Endothelial cell of umbilical vein (primary cell): ENCODE measurements at regions of chr22 and their contacts with region 1.

Region 1: DNA sequence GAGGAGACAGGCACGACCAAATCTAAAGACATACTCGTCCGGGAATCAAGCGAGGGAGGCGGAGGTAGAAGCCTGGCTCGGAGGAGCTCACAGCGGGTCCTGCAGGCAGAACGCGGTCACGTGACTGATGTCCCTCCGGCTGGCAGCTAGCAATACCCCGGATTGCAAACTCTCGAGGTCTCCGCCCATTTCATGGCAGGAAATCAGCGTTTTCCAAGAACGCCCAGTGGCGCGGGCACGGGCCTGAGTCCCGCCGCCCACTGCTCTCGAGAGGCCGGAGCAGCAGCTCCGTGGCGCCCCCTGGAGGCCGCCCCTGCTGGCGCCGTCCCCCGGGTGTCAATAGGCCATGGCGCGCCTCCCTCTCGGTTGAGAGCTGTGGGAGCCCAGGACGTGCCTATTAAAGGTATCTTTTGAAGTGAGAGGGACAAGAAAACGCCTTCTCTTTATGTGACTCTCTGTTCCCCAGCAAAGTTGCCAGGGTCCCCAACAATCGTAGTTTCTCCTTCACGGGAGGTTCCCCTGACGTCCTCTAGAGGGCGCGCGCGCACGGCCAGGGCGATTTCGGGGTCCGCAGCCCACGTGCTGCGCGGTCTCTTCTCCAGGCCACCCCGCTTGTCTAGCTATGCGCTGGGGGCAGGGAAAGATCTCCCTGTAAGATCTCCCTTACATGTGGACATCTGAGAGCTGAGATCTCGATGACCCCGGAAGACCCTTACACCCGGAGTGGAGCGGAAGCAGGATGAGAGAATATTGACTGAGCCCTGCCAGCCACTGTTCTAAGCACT is 37.3 kb upstream of the RBFOX2 start:
- DNase-seq: peak; percentile 95
- H3K4me3 ChIP-seq: peak overlapping the region; percentile 22 to 69 (median 37)
- H3K27ac ChIP-seq: peak overlapping the region; percentile 54
- H3K4me1 ChIP-seq: peaks cover 9% of the 10 kb centered on the region
- H3K27me3 ChIP-seq: no peaks in the 10 kb centered on the region
- CTCF ChIP-seq: peak; percentile 94 to 100
- POLR2A ChIP-seq: peak; percentile 91

Region 2: GRCh38 chr22:35627264-35628041 is 438.5 kb before region 1 on chr22:
- CTCF ChIA-PET with region 1: interaction called, 19 read pairs
- POLR2A ChIA-PET with region 1: no interaction called
- dilution Hi-C with region 1: no loop called
- intact Hi-C with region 1: loop called (anchors 1 kb)
- DNase-seq: peak; percentile 76
- H3K4me3 ChIP-seq: peak overlapping the region; percentile 27 to 58 (median 51)
- H3K27ac ChIP-seq: peak overlapping the region; percentile 30
- H3K4me1 ChIP-seq: peaks cover 8% of the 10 kb centered on the region
- H3K27me3 ChIP-seq: no peaks in the 10 kb centered on the region
- CTCF ChIP-seq: peak; percentile 48 to 54
- POLR2A ChIP-seq: peak; percentile 21

Region 3: DNA sequence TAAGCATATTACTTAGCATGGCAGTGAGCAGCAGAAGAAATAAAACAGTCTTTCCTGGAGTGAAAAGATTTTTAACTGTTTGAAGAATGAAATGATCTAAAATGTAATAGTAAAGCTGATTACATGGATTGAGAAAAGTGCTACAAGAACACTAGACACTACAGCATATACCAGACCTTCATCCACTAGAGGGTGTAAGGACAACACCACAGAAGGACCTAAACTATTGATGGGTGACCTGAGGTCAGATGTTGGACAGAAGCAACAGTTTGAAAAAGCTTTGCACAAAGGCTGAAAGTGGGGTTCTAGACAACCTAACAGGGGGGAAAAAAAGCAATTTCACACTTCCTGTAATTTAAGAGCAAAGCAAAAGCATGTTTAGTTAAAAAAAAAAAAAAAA is 135.0 kb before region 1 on chr22:
- CTCF ChIA-PET with region 1: interaction called, 92 read pairs
- POLR2A ChIA-PET with region 1: no interaction called
- dilution Hi-C with region 1: no loop called
- intact Hi-C with region 1: loop called (anchors 1 kb)
- DNase-seq: peak; percentile 77
- H3K4me3 ChIP-seq: no peak overlapping the region
- H3K27ac ChIP-seq: no peak overlapping the region
- H3K4me1 ChIP-seq: no peaks in the 10 kb centered on the region
- H3K27me3 ChIP-seq: no peaks in the 10 kb centered on the region
- CTCF ChIP-seq: peak; percentile 40 to 60
- POLR2A ChIP-seq: no peak

Region 4: DNA sequence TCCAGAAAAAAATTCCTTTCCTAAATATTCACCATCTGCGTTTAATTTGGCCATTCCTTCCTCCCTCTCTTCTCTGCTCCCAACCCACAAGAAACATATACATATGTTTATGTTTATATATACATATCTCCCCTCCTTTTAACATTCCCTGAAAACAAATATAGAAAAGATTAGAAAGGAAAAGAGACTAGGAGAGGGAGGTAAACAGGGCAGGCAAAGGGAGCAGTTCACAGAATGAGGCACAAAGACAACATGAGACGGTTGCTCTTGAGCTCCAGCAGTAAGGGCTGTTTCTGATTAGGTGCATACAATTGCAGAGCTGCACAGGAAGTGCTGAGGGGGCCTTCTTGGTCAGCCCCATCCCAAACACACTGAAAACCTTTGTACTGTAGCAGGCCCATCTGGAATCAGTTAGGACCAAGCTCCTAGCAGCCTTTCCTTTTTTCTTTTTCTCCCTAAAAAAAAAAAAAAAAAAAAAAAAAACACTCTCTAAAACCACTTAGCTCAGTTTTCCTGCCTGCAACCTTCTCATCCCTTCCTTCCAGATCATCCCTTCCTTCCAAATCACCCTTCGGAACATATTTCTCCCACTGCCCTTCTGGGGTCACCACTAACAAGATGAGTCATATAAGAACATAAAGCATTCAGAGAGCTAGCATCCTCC is 94.4 kb before region 1 on chr22:
- CTCF ChIA-PET with region 1: interaction called, 15 read pairs
- POLR2A ChIA-PET with region 1: no interaction called
- dilution Hi-C with region 1: no loop called
- intact Hi-C with region 1: no loop called
- DNase-seq: peak; percentile 61
- H3K4me3 ChIP-seq: no peak overlapping the region
- H3K27ac ChIP-seq: peak overlapping the region; percentile 42
- H3K4me1 ChIP-seq: peaks cover 29% of the 10 kb centered on the region
- H3K27me3 ChIP-seq: no peaks in the 10 kb centered on the region
- CTCF ChIP-seq: no peak
- POLR2A ChIP-seq: no peak

Region 5: GRCh38 chr22:36022162-36022561 is 43.8 kb before region 1 on chr22:
- CTCF ChIA-PET with region 1: interaction called, 65 read pairs
- POLR2A ChIA-PET with region 1: no interaction called
- dilution Hi-C with region 1: no loop called
- intact Hi-C with region 1: no loop called
- DNase-seq: no peak
- H3K4me3 ChIP-seq: no peak overlapping the region
- H3K27ac ChIP-seq: no peak overlapping the region
- H3K4me1 ChIP-seq: peaks cover 10% of the 10 kb centered on the region
- H3K27me3 ChIP-seq: no peaks in the 10 kb centered on the region
- CTCF ChIP-seq: no peak
- POLR2A ChIP-seq: no peak

Region 6: GRCh38 chr22:36077271-36077670 is 11.3 kb after region 1 on chr22:
- CTCF ChIA-PET with region 1: interaction called, 46 read pairs
- POLR2A ChIA-PET with region 1: no interaction called
- dilution Hi-C with region 1: no loop called
- intact Hi-C with region 1: no loop called
- DNase-seq: no peak
- H3K4me3 ChIP-seq: no peak overlapping the region
- H3K27ac ChIP-seq: no peak overlapping the region
- H3K4me1 ChIP-seq: no peaks in the 10 kb centered on the region
- H3K27me3 ChIP-seq: peaks cover 0 to 5% of the 10 kb centered on the region in 2 experiments
- CTCF ChIP-seq: no peak
- POLR2A ChIP-seq: no peak

Region 7: GRCh38 chr22:36277482-36278291 is 211.7 kb after region 1 on chr22:
- CTCF ChIA-PET with region 1: no interaction called
- POLR2A ChIA-PET with region 1: no interaction called
- dilution Hi-C with region 1: no loop called
- intact Hi-C with region 1: no loop called
- DNase-seq: peak; percentile 59
- H3K4me3 ChIP-seq: no peak overlapping the region
- H3K27ac ChIP-seq: no peak overlapping the region
- H3K4me1 ChIP-seq: no peaks in the 10 kb centered on the region
- H3K27me3 ChIP-seq: no peaks in the 10 kb centered on the region
- CTCF ChIP-seq: peak; percentile 65 to 88
- POLR2A ChIP-seq: peak; percentile 18